MCF 10A (cell line): ENCODE measurements at regions of chr5 and their contacts with region 1.

Region 1: GRCh38 chr5:177071666-177072385 is 14.9 kb upstream of the FGFR4 start:
- DNase-seq: peak; percentile 93
- H3K4me3 Mint-ChIP-seq: no peak overlapping the region
- H3K27ac Mint-ChIP-seq: no peak overlapping the region
- H3K4me1 Mint-ChIP-seq: peaks cover 6% of the 10 kb centered on the region
- H3K27me3 Mint-ChIP-seq: no peaks in the 10 kb centered on the region
- CTCF ChIP-seq: peak; percentile 88

Region 2: DNA sequence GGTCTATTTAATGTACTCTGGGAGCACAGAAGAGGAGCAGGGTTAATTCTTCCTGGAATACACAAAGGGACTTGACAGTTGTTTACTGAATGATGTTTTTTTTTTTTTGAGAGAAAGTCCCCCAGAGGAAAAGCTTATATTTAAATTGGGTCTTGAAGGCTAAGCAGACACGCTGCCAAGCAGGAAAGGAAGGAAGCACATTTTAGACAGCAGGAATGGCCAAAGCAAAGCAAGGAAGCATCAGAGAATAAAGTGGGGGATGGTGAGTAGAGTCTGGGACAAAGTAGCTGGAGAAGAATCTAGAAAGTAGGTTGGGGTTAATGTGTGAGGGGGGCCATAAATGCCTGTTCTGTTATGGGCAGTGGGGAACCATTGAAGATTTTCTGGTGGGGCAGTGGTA is 27.9 kb before region 1 on chr5:
- CTCF ChIA-PET with region 1: interaction called, 12 read pairs
- POLR2A ChIA-PET with region 1: no interaction called
- intact Hi-C with region 1: no loop called
- DNase-seq: no peak
- H3K4me3 Mint-ChIP-seq: no peak overlapping the region
- H3K27ac Mint-ChIP-seq: peak overlapping the region; percentile 11
- H3K4me1 Mint-ChIP-seq: peaks cover 12% of the 10 kb centered on the region
- H3K27me3 Mint-ChIP-seq: no peaks in the 10 kb centered on the region
- CTCF ChIP-seq: no peak

Region 3: DNA sequence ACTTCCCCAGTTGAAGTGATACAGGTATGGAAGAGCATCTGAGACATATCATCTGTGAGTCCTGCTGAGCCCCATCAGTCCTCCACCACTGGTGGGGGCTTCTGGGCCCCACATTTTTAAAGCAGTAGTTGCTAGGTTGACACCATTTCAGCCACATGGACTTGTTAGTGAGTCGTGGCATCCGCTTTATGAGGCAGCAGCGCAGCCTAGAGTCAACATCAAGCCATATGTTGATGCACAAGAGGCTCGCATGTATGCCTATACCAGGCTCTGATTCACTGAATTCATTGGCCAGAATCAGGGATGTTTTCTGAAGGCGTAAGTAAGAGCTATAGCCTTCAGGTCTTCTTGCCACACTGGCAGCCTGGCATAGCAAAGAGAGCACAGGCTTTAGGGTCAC is 22.5 kb before region 1 on chr5:
- CTCF ChIA-PET with region 1: interaction called, 19 read pairs
- POLR2A ChIA-PET with region 1: interaction called, 4 read pairs
- intact Hi-C with region 1: no loop called
- DNase-seq: peak; percentile 20
- H3K4me3 Mint-ChIP-seq: no peak overlapping the region
- H3K27ac Mint-ChIP-seq: no peak overlapping the region
- H3K4me1 Mint-ChIP-seq: no peaks in the 10 kb centered on the region
- H3K27me3 Mint-ChIP-seq: no peaks in the 10 kb centered on the region
- CTCF ChIP-seq: no peak

Region 4: DNA sequence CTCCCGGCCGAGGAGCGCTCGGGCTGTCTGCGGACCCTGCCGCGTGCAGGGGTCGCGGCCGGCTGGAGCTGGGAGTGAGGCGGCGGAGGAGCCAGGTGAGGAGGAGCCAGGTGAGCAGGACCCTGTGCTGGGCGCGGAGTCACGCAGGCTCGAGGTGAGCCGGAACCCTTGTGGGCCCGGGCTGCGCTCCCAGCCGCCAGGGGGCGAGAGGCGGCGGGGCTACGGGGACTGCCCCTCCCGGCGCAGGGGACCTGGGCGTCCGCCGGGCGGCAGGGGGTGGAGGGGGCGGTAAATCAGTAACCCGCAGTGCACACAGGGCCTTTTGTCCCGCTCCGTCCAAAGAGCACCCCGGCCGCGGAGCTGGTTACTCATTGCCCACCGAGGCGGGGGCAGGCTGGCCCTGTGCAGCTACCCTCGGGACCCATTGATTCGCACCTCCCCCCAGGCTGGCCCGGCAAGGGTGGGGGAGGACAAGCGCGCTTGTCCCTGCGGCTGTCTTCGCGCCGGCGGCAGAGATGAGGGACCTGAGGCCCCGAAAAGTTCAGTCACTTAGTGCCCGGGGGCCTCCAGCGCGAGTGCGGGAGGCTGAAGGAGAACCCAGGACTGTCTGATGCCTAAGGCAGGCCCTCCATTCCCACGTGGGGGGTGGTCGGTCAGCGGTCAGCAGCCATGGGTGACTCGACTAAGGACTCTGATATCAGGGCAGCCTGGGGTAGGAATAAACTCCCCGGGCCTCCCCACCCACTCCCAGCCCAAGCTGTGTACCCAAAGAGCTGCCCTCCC is 15.3 kb after region 1 on chr5:
- CTCF ChIA-PET with region 1: interaction called, 91 read pairs
- POLR2A ChIA-PET with region 1: interaction called, 4 read pairs
- intact Hi-C with region 1: no loop called
- DNase-seq: no peak
- H3K4me3 Mint-ChIP-seq: peak overlapping the region; percentile 24
- H3K27ac Mint-ChIP-seq: no peak overlapping the region
- H3K4me1 Mint-ChIP-seq: peaks cover 7% of the 10 kb centered on the region
- H3K27me3 Mint-ChIP-seq: peaks cover 22% of the 10 kb centered on the region
- CTCF ChIP-seq: peak; percentile 59

Region 5: GRCh38 chr5:177094224-177095087 is 22.6 kb after region 1 on chr5:
- CTCF ChIA-PET with region 1: interaction called, 12 read pairs
- POLR2A ChIA-PET with region 1: interaction called, 3 read pairs
- intact Hi-C with region 1: no loop called
- DNase-seq: peak; percentile 85
- H3K4me3 Mint-ChIP-seq: no peak overlapping the region
- H3K27ac Mint-ChIP-seq: no peak overlapping the region
- H3K4me1 Mint-ChIP-seq: peaks cover 11% of the 10 kb centered on the region
- H3K27me3 Mint-ChIP-seq: peaks cover 3% of the 10 kb centered on the region
- CTCF ChIP-seq: no peak

Region 6: DNA sequence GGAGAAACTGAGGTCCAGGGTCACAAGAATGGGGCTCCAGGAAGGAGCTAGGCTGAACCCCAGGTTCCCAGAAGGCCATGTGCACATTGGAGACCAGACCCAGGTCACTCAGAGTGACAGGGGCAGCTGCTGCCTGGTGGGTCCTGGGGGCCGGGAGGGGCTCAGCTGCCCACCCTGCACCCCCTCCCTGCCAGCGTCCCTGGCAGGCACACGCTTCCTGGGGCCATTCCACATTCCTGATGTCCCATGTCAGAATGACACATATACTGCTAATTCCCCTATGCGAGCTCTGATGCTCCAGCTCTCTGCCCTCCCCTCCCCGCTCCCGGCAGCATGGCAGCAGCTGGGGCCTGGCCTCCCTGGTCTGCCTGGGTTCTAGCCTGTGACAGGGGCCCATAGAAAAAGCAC is 28.9 kb after region 1 on chr5:
- CTCF ChIA-PET with region 1: interaction called, 12 read pairs
- POLR2A ChIA-PET with region 1: no interaction called
- intact Hi-C with region 1: no loop called
- DNase-seq: no peak
- H3K4me3 Mint-ChIP-seq: no peak overlapping the region
- H3K27ac Mint-ChIP-seq: no peak overlapping the region
- H3K4me1 Mint-ChIP-seq: no peaks in the 10 kb centered on the region
- H3K27me3 Mint-ChIP-seq: peaks cover 23% of the 10 kb centered on the region
- CTCF ChIP-seq: no peak